GM10248 (cell line): ENCODE measurements at regions of chr5 and their contacts with region 1.

Region 1: DNA sequence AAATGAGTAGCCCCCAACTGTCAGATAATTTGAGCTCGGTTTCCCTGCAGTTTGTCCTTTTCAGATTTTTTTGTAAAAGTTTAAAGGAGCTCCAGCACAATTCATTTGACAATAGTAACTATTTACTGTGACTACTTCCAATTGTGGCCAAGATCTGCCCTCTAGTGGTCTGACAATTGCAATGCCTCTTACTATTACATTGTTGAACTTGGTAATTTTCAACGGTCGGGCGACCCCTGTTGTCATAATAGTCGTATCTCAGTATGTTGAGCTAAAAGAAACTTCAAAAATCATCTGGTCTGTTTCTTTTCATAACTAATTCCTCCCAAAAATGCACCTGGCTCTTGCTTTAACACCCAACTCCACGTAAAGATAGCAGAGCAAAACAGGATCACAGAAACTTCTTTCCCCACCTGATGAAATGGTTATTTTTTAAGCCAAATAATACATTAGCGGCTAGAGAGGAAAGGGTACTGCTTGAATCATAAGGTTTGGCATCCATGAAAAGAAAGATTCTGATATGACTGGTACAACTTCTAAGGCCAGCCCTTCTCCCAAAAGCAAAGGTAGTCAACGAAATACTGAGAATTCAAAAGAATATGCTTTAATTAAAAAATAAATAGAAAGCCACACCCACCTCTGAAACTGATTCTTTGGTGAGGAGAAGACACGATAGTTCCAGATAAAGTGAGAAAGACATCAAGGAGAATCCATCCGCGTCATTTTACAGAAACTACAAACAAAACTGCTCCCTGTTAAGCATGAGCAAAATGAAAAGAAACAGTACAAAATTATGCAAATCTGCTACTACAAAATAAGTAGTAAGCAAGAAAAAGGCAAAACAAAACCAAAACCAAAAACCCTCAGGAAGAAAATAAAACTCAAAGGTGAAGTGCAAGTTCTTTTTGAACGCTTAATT is 76.9 kb upstream of the HTR4 start:
- DNase-seq: peak; percentile 50
- CTCF ChIP-seq: peak; percentile 85

Region 2: DNA sequence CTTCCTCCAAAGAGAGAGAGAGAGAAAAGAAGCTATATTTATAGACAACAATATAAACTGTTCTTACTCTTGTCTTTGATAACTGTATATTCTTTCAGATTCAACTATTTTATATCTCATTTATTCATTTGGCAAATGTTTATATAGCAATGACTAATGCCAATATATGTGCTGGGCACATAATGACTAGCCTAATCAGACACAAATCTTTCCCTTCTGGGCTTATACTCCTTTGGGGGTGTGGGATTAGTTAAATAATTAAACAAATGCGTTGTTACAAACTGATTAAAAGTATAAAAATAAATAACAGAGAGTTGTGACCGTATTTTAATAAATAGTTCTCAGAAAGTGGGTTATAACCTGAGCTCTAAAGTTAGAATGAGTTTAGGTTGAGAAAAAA is 558.8 kb before region 1 on chr5:
- CTCF ChIA-PET with region 1: interaction called, 10 read pairs
- POLR2A ChIA-PET with region 1: no interaction called
- DNase-seq: no peak
- CTCF ChIP-seq: no peak

Region 3: GRCh38 chr5:148443998-148444397 is 287.2 kb before region 1 on chr5:
- CTCF ChIA-PET with region 1: interaction called, 104 read pairs
- POLR2A ChIA-PET with region 1: no interaction called
- DNase-seq: peak; percentile 49
- CTCF ChIP-seq: peak; percentile 67

Region 4: GRCh38 chr5:148708854-148709253 is 22.3 kb before region 1 on chr5:
- CTCF ChIA-PET with region 1: interaction called, 19 read pairs
- POLR2A ChIA-PET with region 1: no interaction called
- DNase-seq: no peak
- CTCF ChIP-seq: no peak

Region 5: DNA sequence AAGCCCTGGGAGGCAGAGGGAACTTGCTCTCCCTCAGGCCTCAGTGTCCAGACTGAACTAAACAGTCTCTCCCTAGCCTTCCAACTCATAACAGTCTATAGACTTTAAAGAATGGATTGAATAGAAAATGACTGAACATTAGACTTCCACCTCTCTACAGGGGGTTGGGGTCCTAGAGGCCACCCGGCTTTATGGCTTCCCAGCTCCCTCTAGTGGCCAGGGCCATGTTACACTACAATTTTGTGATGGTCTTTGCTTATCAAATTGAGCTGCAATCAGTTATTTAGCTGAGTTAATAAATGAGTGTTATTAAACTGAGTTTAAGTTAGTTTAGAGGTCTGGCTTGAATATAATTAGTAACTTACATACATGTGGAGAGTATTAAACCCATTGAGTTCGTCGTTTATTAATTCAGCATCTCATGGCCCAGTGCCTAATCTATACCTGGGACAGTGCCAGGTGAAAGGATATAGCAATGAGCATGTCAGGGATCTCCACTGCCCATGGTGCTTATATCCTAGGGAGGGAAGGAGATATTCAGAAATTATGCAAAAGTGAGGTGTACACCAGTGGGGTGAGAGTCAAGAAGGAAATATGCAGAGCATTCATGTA is 226.5 kb after region 1 on chr5:
- CTCF ChIA-PET with region 1: interaction called, 265 read pairs
- POLR2A ChIA-PET with region 1: no interaction called
- DNase-seq: peak; percentile 54
- CTCF ChIP-seq: peak; percentile 62

Region 6: GRCh38 chr5:149035372-149035790 is 304.2 kb after region 1 on chr5:
- CTCF ChIA-PET with region 1: interaction called, 386 read pairs
- POLR2A ChIA-PET with region 1: no interaction called
- DNase-seq: peak; percentile 54
- CTCF ChIP-seq: peak; percentile 85

Region 7: GRCh38 chr5:149254506-149254905 is 523.3 kb after region 1 on chr5:
- CTCF ChIA-PET with region 1: no interaction called
- POLR2A ChIA-PET with region 1: no interaction called
- DNase-seq: no peak
- CTCF ChIP-seq: no peak

Region 8: GRCh38 chr5:149887622-149888183 is 1156.5 kb after region 1 on chr5:
- CTCF ChIA-PET with region 1: no interaction called
- POLR2A ChIA-PET with region 1: no interaction called
- DNase-seq: no peak
- CTCF ChIP-seq: no peak